ENCODE measurements at regions of chr6 and their contacts with region 1.

Region 1: DNA sequence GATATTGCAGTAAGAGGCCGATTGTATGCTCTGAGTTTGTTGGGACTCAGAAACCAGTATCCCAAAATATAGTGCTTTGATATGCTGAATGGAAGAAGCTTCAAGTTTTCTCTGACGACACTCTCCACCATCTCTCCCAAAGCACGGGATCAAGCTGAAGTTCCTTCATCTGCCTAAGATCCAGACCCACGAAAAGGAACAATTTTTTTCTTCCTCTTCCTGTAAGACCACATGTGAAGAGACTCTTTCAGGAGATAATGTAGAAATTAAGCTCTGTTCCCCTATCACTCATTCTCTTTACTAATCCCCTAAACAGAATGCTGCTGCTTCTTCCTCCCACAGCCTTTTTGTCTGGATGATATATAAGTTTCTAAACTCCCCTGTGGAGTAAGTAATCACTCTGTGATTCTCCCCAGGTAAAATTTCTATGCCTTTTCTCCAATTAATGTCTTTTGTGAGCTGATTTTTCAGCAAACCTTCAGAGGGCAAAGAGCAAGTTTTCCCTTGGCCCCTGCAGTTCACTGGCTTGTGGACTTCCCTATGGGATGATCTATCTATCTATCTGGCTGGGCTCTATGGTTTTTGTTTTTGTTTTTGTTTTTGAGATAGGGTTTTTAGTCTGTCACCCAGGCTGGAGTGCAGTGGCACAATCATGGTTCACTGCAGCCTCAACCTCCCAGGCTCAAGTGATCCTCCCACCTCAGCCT is 13.5 kb upstream of the PNRC1 start:
- DNase-seq: no peak
- H3K4me3 Mint-ChIP-seq: no peak overlapping the region
- H3K27ac Mint-ChIP-seq: no peak overlapping the region
- H3K4me1 Mint-ChIP-seq: peaks cover 15% of the 10 kb centered on the region
- H3K27me3 Mint-ChIP-seq: no peaks in the 10 kb centered on the region
- CTCF ChIP-seq: no peak

Region 2: GRCh38 chr6:89048985-89049384 is 18.1 kb before region 1 on chr6:
- CTCF ChIA-PET with region 1: no interaction called
- intact Hi-C with region 1: loop called (anchors 1 kb)
- DNase-seq: no peak
- H3K4me3 Mint-ChIP-seq: no peak overlapping the region
- H3K27ac Mint-ChIP-seq: no peak overlapping the region
- H3K4me1 Mint-ChIP-seq: no peaks in the 10 kb centered on the region
- H3K27me3 Mint-ChIP-seq: no peaks in the 10 kb centered on the region
- CTCF ChIP-seq: no peak

Region 3: DNA sequence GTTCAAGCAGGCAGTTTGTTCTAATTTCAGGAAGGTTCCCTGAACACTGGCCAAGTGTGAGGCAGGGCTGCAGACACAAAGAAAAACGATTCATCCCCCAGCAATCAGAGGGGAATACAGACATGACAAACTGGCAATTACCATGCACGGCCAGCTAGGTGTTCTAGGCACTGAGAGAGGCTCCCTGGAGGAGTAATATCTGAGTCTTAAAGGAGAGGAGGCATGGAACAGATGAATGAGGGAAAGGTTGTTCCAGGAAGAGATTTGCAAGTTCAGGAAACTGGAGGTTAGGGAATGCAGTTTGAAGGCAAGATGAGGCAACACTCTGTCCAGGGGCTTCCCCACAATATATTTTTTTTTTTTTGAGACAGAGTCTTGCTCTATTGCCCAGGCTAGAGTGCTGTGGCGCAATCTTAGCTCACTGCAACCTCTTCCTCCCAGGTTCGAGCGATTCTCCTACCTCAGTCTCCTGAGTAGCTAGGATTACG is 333.9 kb after region 1 on chr6:
- CTCF ChIA-PET with region 1: no interaction called
- intact Hi-C with region 1: no loop called
- DNase-seq: no peak
- H3K4me3 Mint-ChIP-seq: no peak overlapping the region
- H3K27ac Mint-ChIP-seq: no peak overlapping the region
- H3K4me1 Mint-ChIP-seq: peaks cover 8% of the 10 kb centered on the region
- H3K27me3 Mint-ChIP-seq: no peaks in the 10 kb centered on the region
- CTCF ChIP-seq: no peak